ENCODE measurements at regions of chr7 and their contacts with region 1.

Region 1: DNA sequence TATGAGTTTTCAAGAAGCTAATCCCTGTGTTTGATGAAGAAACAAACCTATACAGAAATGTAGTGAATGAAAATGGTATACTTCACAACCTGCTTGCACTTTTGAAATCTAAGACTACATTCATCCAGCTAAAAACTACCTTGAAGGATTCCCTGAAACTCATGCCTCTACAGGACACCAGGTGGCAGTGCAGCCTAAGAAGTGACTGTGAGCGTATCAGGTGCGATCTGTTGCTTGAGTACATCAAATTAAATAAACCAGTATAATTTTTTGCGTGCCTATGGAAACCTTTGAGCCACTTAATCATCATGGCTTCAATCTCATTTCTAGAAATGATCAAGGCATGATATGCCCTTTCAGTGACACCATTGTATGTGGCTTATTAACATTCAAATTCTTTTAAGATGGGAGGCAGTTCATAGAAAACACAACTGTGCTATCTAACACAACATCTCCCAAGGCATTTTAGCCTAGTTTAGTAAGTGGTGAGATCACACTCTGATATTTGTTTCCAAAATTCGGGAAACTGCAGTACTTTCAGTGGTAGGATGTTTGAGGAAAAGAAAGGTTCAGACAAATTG is 57.4 kb downstream of the PPP1R17 start:
- DNase-seq: peak; percentile 68
- ATAC-seq: peak; percentile 67

Region 2: GRCh38 chr7:32204361-32205018 is 460.1 kb after region 1 on chr7:
- intact Hi-C with region 1: loop called (anchors 5 kb)
- DNase-seq: peak; percentile 78
- ATAC-seq: peak; percentile 96

Region 3: GRCh38 chr7:32347244-32347828 is 603.0 kb after region 1 on chr7:
- intact Hi-C with region 1: loop called (anchors 10 kb)
- DNase-seq: no peak
- ATAC-seq: no peak

Region 4: DNA sequence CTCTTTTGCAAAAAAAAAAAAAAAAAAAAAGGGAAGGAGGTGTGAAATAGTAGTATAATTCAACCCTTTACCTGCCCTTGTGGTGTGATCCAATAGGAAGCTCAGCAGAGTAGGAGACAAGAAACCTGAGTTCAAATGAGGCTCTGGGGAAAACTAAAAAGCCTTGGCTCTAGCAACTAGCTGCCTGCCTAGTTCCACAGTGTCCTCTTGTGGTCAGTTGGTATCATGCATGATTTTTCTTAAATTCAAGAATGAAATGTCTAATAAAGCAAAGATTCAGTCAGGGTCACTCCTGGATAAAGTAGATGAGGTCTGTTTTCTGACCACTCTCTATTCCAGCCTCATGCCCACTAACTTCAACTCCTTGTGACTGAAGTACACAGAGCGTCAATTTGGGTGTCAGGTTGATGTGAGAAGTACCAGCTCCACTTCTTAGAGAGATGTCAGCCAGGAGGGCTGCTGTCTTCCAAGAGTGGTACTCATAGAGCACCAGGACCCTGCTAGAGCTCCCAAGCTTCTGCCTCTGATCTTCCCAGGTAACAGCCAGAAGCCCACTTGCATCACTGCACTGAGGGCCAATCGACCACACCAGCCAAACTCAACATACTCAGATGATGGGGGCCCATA is 735.3 kb after region 1 on chr7:
- intact Hi-C with region 1: loop called (anchors 10 kb)
- DNase-seq: no peak
- ATAC-seq: no peak